ENCODE measurements at regions of chr2 and their contacts with region 1.

Region 1: GRCh38 chr2:216108967-216109921 is at the start of gene XRCC5:
- H3K4me3 ChIP-seq: peak within 1 kb of the TSS; percentile 92
- H3K27ac ChIP-seq: peak within 1 kb of the TSS; percentile 80
- H3K4me1 ChIP-seq: no peaks in the 10 kb centered on the region
- CTCF ChIP-seq: peak; percentile 36; the same call in 1 of the 2 replicates

Region 2: DNA sequence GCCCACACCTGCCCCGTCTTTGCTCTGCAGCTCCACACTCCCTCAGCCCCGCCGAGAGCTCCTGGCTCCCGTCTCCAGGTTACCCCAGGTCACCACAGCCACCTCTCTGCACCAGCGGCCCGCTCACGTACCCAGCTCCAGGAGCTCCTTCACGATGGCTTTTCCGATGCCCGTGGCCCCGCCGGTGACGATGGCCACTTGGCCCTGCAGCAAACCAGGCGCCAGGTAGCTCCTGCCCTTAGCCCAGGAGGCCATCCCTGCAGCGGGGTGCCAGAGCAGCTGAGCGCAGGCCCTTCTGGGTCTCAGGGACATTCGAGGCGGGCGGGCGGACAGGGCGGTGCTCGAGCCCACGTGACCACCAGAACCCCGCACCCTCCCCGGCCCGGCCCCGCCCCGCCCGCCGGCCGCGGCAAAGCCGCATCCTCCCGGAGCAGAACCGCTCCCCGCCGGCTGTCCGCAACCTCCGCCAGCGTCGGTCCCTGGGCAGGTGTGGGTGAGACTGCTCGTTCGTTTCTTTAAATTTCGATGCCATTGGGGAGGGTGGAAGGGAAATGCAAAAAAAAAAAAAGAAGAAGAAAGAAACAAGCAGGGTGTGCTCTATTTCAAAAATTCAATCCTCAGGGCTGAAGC is 27.6 kb before region 1 on chr2 and contains the starts of genes PECR and TMEM169:
- CTCF ChIA-PET with region 1: interaction called, 4 read pairs
- POLR2A ChIA-PET with region 1: interaction called, 18 read pairs
- H3K4me3 ChIP-seq: peak within 1 kb of the TSS; percentile 80
- H3K27ac ChIP-seq: peak within 1 kb of the TSS; percentile 48; the same call in 1 of the 2 replicates
- H3K4me1 ChIP-seq: peaks cover 3% of the 10 kb centered on the region
- CTCF ChIP-seq: no peak; the same call in 1 of the 2 replicates

Region 3: DNA sequence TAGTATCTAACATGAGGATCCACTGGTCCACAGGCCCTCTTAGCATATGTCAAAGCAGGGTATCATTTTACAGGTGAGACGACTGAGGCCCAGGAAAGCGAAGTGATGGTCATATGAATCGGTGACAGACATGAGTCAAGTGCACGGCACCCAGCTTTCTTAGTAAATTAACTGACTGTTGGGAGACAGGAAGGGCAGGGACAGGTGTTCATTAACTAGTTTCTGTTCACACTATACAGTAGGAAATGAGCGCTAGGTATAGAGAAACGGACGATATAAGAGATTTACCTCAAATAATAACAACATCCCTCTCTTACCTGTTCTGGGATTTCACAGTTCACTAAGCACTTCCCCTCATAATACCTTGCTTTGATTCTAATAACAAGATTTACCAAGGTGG is 301.3 kb after region 1 on chr2:
- CTCF ChIA-PET with region 1: no interaction called
- POLR2A ChIA-PET with region 1: no interaction called
- H3K4me3 ChIP-seq: no peak overlapping the region
- H3K27ac ChIP-seq: no peak overlapping the region
- H3K4me1 ChIP-seq: no peaks in the 10 kb centered on the region
- CTCF ChIP-seq: no peak

Measured in HEK293 (cell line).